Colonic mucosa (tissue), 4 donors: ENCODE measurements at regions of chr12 and their contacts with region 1.

Region 1: DNA sequence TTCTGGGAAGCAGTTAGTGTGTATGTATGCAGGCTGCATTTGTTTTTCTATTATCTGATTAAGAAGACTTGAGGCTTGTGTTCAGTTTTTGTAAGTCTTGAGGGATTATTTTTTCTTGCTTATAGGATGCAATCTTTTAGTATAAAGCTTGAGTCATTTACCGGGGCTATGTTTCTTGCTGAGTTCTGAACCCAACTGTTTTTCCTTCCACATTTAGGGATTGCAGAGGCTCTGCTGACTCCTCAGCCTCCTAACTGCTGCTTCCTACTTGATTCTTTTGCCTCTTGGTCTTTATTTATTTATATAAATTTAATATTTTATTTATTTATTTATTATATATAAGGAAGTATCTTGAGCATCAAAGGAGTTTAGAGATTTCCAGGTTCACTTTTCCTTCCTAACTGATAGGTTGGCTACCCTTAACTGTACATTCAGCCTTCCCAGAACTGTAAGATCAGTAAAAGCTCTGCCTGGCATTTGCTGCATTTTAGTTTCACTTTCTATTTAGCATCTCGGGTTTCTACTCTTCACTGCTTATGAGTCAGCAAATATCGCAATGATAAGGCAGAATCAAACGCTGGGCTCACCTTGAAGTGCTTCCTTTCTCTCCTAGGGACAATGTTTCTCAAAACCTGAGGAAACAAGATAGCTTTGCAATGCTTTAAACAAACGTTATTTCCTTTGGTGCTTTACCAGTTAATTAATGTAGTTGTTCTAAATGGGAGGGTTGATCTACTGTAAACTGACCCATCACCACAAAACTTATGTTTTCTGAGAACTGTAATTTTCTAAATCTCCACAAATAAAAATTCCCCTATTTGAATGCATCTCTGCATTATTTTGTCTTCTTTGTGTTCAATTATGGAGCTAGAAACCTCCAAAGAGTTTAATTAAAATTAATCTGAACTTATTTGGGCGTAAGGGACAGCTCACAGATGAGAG is 1183.7 kb upstream of the TMEM132C start:
- DNase-seq: peak; percentile 25
- H3K4me3 ChIP-seq: peak overlapping the region; percentile 6
- H3K27ac ChIP-seq: peak overlapping the region; percentile 13
- H3K4me1 ChIP-seq: peaks cover 3% of the 10 kb centered on the region
- H3K27me3 ChIP-seq: no peaks in the 10 kb centered on the region
- CTCF ChIP-seq: no peak

Region 2: GRCh38 chr12:127165567-127166392 is 82.5 kb after region 1 on chr12:
- intact Hi-C with region 1: loop called (anchors 5 kb)
- DNase-seq: peak; percentile 88
- H3K4me3 ChIP-seq: peak overlapping the region; percentile 37
- H3K27ac ChIP-seq: peak overlapping the region; percentile 61
- H3K4me1 ChIP-seq: no peaks in the 10 kb centered on the region
- H3K27me3 ChIP-seq: no peaks in the 10 kb centered on the region
- CTCF ChIP-seq: no peak

Region 3: DNA sequence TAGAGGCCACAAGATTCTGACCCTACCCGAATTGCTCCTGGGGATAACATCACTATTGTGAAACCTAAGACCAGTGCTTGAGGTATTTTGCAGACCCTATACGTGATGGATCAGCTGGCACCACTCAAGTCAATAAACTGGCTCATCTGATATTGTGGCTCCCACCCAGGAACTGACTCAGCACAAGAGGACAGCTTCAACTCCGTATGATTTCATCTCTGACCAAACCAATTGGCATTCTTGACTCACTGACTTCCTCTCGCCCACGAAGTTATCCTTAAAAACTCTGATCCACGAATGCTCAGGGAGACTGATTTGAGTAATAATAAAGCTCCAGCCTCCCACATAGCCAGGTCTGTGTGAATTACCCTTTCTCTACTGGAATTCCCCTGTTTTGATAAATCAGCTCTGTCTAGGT is 147.6 kb after region 1 on chr12:
- intact Hi-C with region 1: no loop called
- DNase-seq: no peak
- H3K4me3 ChIP-seq: no peak overlapping the region
- H3K27ac ChIP-seq: no peak overlapping the region
- H3K4me1 ChIP-seq: no peaks in the 10 kb centered on the region
- H3K27me3 ChIP-seq: no peaks in the 10 kb centered on the region
- CTCF ChIP-seq: no peak